CD8-positive, alpha-beta T cell (primary cell): ENCODE measurements at regions of chr16 and their contacts with region 1.

Region 1: GRCh38 chr16:58345574-58346354 is 46.5 kb upstream of the GINS3 start:
- DNase-seq: no peak
- ATAC-seq: no peak
- H3K4me3 ChIP-seq: no peak overlapping the region
- H3K4me3 Mint-ChIP-seq: no peak overlapping the region
- H3K27ac ChIP-seq: no peak overlapping the region
- H3K27ac Mint-ChIP-seq: no peak overlapping the region
- H3K4me1 ChIP-seq: no peaks in the 10 kb centered on the region
- H3K4me1 Mint-ChIP-seq: no peaks in the 10 kb centered on the region
- H3K27me3 ChIP-seq: peaks cover 0 to 3% of the 10 kb centered on the region in 2 experiments
- H3K27me3 Mint-ChIP-seq: peaks cover 17% of the 10 kb centered on the region
- CTCF ChIP-seq: no peak

Region 2: DNA sequence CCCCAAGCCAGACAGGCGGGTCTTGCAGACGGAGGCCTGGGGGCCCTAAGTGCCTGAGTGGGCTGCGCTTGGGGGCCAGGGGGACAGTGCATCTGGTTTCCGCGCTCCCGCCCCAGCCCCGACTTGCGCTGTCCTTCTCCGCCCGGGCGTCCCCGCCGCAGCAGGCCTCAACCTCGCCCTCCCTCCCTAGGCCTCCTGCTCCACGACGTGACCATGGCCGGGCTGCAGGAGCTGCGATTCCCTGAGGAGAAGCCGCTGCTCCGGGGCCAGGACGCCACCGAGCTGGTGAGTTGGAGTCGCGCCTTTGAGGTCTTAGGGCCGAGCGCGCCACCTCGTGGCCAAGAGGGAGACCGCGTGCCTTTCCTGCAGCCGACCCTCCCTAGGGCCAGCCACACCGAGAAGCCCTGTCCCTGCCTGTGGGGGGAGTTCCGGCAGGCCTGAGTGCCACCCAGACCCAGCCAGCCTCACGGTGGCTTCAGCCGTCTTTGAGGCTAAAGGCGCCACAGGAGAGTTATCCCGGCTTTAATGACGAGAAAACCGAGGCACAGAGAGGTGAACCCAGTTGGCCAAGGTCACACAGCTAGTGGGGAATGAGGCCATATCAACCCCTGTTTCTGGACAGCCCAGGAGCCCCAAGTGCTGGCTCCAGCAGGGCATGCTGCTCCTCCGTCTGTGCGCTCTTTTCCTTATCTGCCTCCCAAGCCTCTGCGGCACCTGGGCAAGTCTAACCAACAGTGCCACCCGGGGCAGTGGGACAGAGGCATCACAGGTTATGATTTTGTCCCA is 142.0 kb after region 1 on chr16:
- CTCF ChIA-PET with region 1: interaction called, 4 read pairs
- POLR2A ChIA-PET with region 1: no interaction called
- intact Hi-C with region 1: loop called in 1 of 2 experiments (anchors 2 kb)
- DNase-seq: peak; percentile 42 to 83 (median 73)
- ATAC-seq: peak; percentile 83
- H3K4me3 ChIP-seq: no peak overlapping the region
- H3K4me3 Mint-ChIP-seq: no peak overlapping the region
- H3K27ac ChIP-seq: no peak overlapping the region
- H3K27ac Mint-ChIP-seq: no peak overlapping the region
- H3K4me1 ChIP-seq: no peaks in the 10 kb centered on the region
- H3K4me1 Mint-ChIP-seq: no peaks in the 10 kb centered on the region
- H3K27me3 ChIP-seq: peaks cover 0 to 7% of the 10 kb centered on the region in 2 experiments
- H3K27me3 Mint-ChIP-seq: peaks cover 3% of the 10 kb centered on the region
- CTCF ChIP-seq: peak; percentile 85